Mammary epithelial cell (primary cell): ENCODE measurements at regions of chr7 and their contacts with region 1.

Region 1: DNA sequence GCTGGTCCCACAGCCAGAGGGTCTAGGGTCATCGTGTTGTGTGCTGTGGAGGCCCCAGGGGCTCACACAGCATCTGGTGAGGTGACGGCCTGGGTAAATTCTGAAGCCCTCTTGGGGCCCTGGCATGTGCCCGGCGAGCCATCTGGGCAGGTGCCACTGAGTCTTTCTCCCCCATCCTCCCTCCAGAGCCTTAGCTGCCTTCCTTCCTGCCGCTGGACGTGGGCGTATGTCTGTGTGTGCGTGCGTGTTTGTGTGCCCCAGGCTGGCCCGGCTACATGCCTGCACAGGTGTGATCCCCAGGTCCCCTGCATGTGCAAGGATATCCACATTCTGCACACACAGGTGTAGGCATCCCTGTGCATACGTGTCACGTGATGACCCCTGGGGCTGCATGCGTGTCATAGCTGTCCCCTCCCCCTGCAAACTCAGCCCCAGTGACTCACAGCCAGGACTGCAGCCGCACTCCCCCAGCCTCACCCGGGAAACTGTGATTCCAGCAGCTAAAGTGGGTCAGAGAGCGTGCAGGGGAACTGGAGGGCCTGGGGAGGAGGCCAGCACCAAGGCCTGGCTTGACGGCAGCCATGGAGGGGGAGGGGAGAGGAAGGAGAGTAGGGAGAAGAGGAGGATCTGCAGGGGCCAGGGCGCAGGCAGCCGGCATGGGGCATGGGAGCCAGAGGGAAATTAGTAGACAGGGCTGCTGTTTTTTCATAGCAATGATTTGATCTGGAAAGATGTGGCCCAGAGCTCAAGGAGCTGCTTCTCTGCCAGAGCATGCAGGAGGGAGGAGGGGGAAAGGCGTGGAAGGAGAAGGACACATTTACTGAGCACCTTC is 46.4 kb downstream of the ELFN1 start:
- DNase-seq: peak; percentile 3
- H3K4me3 ChIP-seq: no peak overlapping the region
- H3K27ac ChIP-seq: no peak overlapping the region
- H3K4me1 ChIP-seq: no peaks in the 10 kb centered on the region
- H3K27me3 ChIP-seq: no peaks in the 10 kb centered on the region
- CTCF ChIP-seq: no peak

Region 2: DNA sequence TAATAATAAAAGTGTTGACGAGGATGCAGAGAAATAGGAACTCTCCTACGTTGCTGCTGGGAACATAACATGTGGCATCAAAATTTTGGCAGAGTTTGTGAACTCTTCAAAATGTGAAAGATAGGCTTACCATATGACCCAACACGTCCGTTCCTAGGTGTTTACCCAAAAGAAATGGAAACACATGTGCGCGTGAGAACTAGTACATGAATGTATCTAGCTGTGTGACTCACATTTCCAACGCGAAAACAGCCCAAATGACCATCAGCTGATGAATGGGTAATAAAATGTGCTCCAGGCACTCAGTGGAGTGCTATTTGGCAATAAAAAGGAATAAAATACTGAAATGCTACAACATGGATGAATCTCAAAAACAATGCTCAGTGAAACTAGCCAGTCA is 56.8 kb before region 1 on chr7:
- CTCF ChIA-PET with region 1: no interaction called
- dilution Hi-C with region 1: loop called (anchors 5 kb)
- in situ Hi-C with region 1: no loop called
- intact Hi-C with region 1: no loop called
- DNase-seq: no peak
- H3K4me3 ChIP-seq: no peak overlapping the region
- H3K27ac ChIP-seq: no peak overlapping the region
- H3K4me1 ChIP-seq: no peaks in the 10 kb centered on the region
- H3K27me3 ChIP-seq: peaks cover 9% of the 10 kb centered on the region
- CTCF ChIP-seq: no peak

Region 3: GRCh38 chr7:1704811-1705738 is 11.4 kb before region 1 on chr7:
- CTCF ChIA-PET with region 1: no interaction called
- dilution Hi-C with region 1: no loop called
- in situ Hi-C with region 1: no loop called
- intact Hi-C with region 1: no loop called
- DNase-seq: no peak
- H3K4me3 ChIP-seq: no peak overlapping the region
- H3K27ac ChIP-seq: no peak overlapping the region
- H3K4me1 ChIP-seq: no peaks in the 10 kb centered on the region
- H3K27me3 ChIP-seq: no peaks in the 10 kb centered on the region
- CTCF ChIP-seq: no peak

Region 4: DNA sequence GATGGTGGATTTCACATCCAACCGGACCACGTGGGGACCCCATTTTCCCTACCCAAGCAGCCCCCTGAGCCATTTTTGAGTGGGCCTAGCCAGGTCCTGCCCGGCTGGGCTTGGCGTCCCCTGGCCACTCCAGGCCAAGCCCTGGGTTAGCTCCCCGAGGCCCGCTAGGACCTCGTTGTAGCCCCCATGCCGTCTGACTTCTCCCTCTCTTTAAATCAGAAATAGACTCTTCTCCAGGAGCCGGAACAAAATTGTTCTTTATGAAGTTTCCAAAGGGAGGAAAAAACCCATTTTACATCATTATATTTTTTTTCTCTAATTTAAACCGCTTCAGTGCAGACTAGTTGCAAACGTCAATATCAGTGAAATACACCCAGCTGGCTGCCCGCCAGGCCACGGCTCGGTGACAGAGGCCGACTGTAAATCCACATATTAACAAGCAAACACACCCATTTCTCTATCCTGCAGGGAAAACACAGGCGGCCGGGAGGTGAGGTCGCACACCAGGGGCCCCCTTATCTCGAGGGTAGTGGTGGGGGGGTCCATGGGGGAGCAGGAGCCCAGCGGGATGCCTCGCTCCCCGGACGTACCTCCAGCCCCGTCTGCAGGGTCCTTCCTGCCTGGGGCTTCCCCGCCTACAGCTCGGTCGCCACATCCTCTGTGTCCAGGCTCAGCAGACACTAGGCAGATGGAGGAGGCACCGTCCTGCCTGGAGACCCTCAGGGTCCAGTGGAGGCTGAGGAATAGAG is 26.2 kb after region 1 on chr7:
- CTCF ChIA-PET with region 1: no interaction called
- dilution Hi-C with region 1: no loop called
- in situ Hi-C with region 1: no loop called
- intact Hi-C with region 1: no loop called
- DNase-seq: no peak
- H3K4me3 ChIP-seq: no peak overlapping the region
- H3K27ac ChIP-seq: no peak overlapping the region
- H3K4me1 ChIP-seq: no peaks in the 10 kb centered on the region
- H3K27me3 ChIP-seq: no peaks in the 10 kb centered on the region
- CTCF ChIP-seq: no peak